Activated naive CD4-positive, alpha-beta T cell treated with anti-CD3 and anti-CD28 coated beads, Interleukin-2, amount 10 ng/mL, durations not matched to agents 7 days and 5 days (primary cell): ENCODE measurements at regions of chr2 and their contacts with region 1.

Region 1: DNA sequence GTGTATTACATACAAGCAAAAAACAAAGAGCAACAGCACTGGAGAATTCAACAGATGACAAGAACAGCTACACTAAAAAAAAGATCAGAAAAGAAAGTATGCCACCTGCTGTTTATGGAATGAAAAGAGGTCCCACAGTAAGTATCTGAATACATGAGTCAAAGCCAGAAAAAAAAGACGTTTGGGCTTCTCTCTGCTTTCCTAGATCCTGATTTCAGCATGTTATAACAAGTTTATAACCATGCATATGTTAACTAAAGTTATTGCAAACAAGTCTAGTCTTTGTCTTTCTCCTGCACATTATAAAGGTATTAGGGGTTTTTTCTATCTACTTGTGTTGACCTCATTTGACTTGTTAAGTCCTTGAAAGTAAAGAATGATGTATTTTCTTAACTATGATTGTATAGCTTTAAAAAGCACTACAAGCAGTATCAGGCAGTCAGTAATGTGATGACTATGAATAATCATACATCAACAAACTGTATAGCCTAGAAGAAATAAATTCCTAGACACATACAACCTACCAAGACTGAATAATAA is 108.5 kb upstream of the COL5A2 start:
- DNase-seq: no peak
- H3K4me3 Mint-ChIP-seq: no peak overlapping the region
- H3K27ac Mint-ChIP-seq: no peak overlapping the region
- H3K4me1 Mint-ChIP-seq: peaks cover 8% of the 10 kb centered on the region
- H3K27me3 Mint-ChIP-seq: no peaks in the 10 kb centered on the region

Region 2: DNA sequence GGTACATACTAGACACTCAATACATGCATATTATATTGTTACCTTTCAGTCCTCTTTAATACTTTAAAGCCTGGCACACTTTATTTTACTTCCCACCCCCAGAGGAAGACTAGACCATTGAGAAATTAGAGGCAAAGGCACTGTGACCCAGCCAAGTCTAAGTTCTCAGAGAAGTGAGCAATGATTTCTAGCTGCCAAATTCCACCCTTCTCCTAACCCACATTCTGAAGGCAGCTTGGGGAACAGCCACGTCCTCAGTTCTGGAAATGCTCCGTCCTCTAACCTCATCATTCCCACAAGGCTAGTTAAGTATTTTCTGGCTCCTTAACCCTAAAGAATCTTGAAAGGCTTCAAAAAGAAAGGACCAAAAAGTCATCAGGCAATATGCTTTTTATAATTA is 195.1 kb before region 1 on chr2:
- CTCF ChIA-PET with region 1: interaction called, 14 read pairs
- DNase-seq: no peak
- H3K4me3 Mint-ChIP-seq: no peak overlapping the region
- H3K27ac Mint-ChIP-seq: no peak overlapping the region
- H3K4me1 Mint-ChIP-seq: peaks cover 13% of the 10 kb centered on the region
- H3K27me3 Mint-ChIP-seq: no peaks in the 10 kb centered on the region

Region 3: DNA sequence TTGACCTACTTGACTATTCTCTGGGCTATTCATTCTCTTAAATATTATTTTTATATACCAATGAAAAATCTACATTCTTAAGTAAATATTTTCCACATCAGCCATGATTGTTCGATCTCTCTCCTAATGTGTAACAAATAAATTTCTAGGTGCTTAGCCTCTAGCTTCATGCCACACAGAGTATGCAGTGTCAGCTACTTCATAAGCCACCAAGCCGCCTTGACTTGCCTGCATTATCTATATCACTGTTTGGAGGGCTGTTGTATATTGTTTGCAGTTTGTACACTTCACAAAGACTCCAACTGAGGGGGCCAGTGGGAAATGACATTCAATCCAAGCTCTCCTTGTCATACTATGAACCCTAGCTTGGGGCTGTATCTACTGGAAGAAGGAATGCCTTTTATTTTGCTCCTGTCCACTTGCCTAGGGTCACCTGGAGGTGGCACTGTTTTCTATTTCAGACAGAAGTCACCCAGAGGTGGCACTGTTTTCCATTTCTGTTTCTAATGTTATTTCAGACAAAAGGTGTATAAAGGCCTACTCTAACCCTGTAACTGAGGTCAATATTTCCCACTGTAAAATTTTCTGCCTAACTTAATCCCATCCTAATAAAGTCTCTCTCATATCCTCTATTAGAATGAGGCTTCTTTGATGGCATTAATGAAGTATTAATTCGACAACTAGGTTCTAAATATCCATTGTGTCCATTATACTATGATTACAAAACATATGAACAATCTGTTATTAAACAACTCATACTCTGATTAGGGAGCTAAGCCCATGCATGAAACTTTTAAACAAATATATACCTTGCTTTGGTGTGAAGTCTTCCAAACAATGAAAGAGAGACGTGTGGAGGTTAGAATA is 144.9 kb before region 1 on chr2:
- CTCF ChIA-PET with region 1: interaction called, 36 read pairs
- DNase-seq: peak; percentile 61
- H3K4me3 Mint-ChIP-seq: no peak overlapping the region
- H3K27ac Mint-ChIP-seq: no peak overlapping the region
- H3K4me1 Mint-ChIP-seq: no peaks in the 10 kb centered on the region
- H3K27me3 Mint-ChIP-seq: no peaks in the 10 kb centered on the region

Region 4: DNA sequence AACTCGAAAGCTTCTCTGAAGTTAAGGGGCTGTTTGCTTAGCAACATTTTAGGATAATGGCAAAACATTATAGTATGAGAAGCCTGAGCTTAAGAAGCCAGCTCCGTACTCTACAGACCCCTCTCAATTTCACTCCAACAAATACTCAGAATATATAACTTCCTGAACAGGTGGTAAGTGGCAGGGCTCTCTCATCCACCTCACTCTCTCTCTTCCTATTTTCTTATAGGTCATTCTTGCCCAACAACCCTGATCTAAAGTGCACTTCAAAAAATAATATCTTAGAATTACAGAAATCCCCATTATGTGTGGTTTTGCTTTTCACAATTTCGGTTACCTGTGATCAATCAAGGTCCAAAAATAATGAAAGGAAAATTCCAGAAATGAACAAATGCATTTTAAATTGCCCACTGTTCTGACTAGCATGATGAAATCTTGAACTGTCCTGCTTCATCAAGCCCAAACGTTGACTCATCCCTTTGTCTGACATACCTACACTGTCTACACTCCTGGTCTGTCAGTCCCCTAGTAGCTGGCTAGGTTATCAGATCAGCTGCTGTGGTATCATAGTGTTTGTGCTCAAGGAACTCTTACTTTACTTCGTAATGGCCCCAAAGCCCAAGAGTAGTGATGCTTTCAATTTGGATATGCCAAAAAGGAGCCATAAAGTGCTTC is 14.4 kb after region 1 on chr2:
- CTCF ChIA-PET with region 1: no interaction called
- DNase-seq: no peak
- H3K4me3 Mint-ChIP-seq: no peak overlapping the region
- H3K27ac Mint-ChIP-seq: peak overlapping the region; percentile 73
- H3K4me1 Mint-ChIP-seq: peaks cover 75% of the 10 kb centered on the region
- H3K27me3 Mint-ChIP-seq: no peaks in the 10 kb centered on the region